ENCODE measurements at regions of chr1 and their contacts with region 1.

Region 1: GRCh38 chr1:17661546-17662157 is 93.5 kb upstream of the ACTL8 start:
- DNase-seq: peak; percentile 12
- ATAC-seq: peak; percentile 83
- H3K4me3 ChIP-seq: no peak overlapping the region
- H3K27ac ChIP-seq: no peak overlapping the region
- H3K4me1 ChIP-seq: 0 out of 4 replicates have a peak, but pooled peaks cover 0 to 4% of the 10 kb centered on the region in 2 experiments
- H3K27me3 ChIP-seq: no peaks in the 10 kb centered on the region
- CTCF ChIP-seq: peak; percentile 64 to 95 (median 84)
- POLR2A ChIP-seq: no peak
- RAD21 ChIP-seq: peak; percentile 84

Region 2: DNA sequence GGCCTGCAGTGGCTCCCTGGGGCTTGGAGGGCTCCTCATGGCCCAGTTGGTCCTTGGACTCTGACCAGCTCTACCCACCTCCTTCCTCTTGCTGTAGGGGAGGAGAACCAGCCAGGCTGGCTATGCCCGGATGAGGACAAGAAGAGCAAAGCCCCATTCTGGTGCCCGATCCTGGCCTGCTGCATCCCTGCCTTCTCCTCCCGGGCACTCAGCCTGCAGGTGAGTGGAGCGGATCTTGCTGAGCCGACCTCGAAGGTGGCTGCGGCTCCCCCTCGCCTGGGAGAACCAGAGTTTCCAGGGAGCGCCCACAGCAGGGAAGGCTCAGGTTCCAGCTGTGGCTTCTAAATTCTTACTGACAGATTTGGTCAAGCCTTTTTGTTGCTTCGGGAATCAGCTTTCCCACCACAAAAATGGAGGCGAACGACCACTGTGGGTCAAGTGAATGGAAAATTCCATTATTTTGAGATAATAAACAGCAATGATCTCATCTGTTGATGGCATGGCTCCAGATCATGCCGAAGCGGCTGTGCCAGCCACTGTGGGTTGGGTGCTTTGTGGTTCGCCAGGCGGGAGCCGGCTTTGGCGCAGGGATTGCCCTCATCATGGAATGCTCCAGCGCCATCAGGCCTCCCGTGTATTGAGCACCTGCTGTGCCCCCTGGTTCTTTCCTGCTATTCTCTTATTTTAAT is 13.1 kb before region 1 on chr1:
- CTCF ChIA-PET with region 1: interaction called, 19 read pairs
- POLR2A ChIA-PET with region 1: no interaction called
- RAD21 ChIA-PET with region 1: no interaction called
- intact Hi-C with region 1: no loop called
- DNase-seq: no peak
- ATAC-seq: no peak
- H3K4me3 ChIP-seq: no peak overlapping the region
- H3K27ac ChIP-seq: no peak overlapping the region
- H3K4me1 ChIP-seq: no peaks in the 10 kb centered on the region
- H3K27me3 ChIP-seq: no peaks in the 10 kb centered on the region
- CTCF ChIP-seq: no peak
- POLR2A ChIP-seq: no peak
- RAD21 ChIP-seq: no peak

Region 3: GRCh38 chr1:17704176-17704575 is 42.5 kb after region 1 on chr1:
- CTCF ChIA-PET with region 1: no interaction called
- POLR2A ChIA-PET with region 1: no interaction called
- RAD21 ChIA-PET with region 1: no interaction called
- intact Hi-C with region 1: no loop called
- DNase-seq: no peak
- ATAC-seq: no peak
- H3K4me3 ChIP-seq: no peak overlapping the region
- H3K27ac ChIP-seq: no peak overlapping the region
- H3K4me1 ChIP-seq: no peaks in the 10 kb centered on the region
- H3K27me3 ChIP-seq: no peaks in the 10 kb centered on the region
- CTCF ChIP-seq: no peak
- POLR2A ChIP-seq: no peak
- RAD21 ChIP-seq: no peak

Region 4: DNA sequence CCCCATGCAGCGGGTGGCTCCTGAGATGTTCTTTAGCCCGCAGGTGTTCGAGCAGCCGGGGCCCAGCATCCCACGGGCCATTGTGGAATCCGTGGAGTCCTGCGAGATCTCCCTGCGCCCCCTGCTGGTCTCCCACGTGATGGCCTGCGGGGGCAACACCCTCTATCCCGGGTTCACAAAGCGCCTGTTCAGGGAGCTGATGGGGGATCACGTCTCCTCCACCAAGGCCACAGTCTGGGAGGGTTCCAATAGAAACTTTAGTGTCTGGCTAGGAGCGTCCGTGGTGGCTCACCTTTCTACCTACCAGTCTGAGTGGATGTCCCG is 164.5 kb after region 1 on chr1:
- CTCF ChIA-PET with region 1: interaction called, 16 read pairs
- POLR2A ChIA-PET with region 1: no interaction called
- RAD21 ChIA-PET with region 1: no interaction called
- intact Hi-C with region 1: loop called (anchors 1 kb)
- DNase-seq: peak; percentile 8
- ATAC-seq: peak; percentile 93
- H3K4me3 ChIP-seq: no peak overlapping the region
- H3K27ac ChIP-seq: no peak overlapping the region
- H3K4me1 ChIP-seq: no peaks in the 10 kb centered on the region
- H3K27me3 ChIP-seq: peaks cover 15% of the 10 kb centered on the region; the same call in 1 of the 2 replicates
- CTCF ChIP-seq: peak; percentile 55 to 83 (median 76); a peak in 5 of 6 replicates
- POLR2A ChIP-seq: no peak
- RAD21 ChIP-seq: peak; percentile 68

Region 5: DNA sequence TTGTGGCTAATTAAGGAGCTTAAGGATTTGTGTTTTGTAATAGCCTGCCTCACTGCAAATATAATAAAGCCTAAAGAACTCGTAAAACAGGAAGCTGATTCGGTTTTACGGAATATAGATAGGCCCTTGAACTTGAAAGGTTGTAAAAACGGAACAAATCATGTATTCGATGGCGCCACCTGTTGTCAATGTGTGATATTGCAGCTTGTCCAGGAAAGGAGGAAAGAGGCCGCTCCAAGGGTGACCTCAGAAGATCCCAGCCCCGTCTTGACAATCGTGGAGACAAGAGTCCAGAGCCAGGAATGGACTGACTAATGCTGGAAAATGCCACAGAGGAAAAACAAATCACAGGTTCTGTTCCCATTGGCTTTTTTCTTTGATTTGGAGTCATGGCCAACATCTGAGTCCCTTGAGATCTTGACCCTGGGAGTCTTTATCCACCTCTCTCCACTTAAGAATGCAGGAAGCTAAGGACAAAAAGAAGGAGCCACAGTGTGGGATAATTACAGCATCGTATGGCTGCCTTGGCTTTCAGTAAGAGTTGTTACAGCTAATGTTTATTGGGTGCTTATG is 438.9 kb after region 1 on chr1:
- CTCF ChIA-PET with region 1: interaction called, 4 read pairs
- POLR2A ChIA-PET with region 1: no interaction called
- RAD21 ChIA-PET with region 1: no interaction called
- intact Hi-C with region 1: loop called (anchors 2 kb)
- DNase-seq: peak; percentile 50
- ATAC-seq: peak; percentile 84
- H3K4me3 ChIP-seq: no peak overlapping the region
- H3K27ac ChIP-seq: no peak overlapping the region
- H3K4me1 ChIP-seq: 0 out of 4 replicates have a peak, but pooled peaks cover 0 to 2% of the 10 kb centered on the region in 2 experiments
- H3K27me3 ChIP-seq: peaks cover 20% of the 10 kb centered on the region
- CTCF ChIP-seq: peak; percentile 65 to 77 (median 76)
- POLR2A ChIP-seq: no peak
- RAD21 ChIP-seq: peak; percentile 72

Region 6: GRCh38 chr1:18581420-18581880 is 919.8 kb after region 1 on chr1:
- CTCF ChIA-PET with region 1: interaction called, 11 read pairs
- POLR2A ChIA-PET with region 1: no interaction called
- RAD21 ChIA-PET with region 1: no interaction called
- intact Hi-C with region 1: no loop called
- DNase-seq: no peak
- ATAC-seq: peak; percentile 94
- H3K4me3 ChIP-seq: no peak overlapping the region
- H3K27ac ChIP-seq: no peak overlapping the region
- H3K4me1 ChIP-seq: peaks cover 0 to 6% of the 10 kb centered on the region in 2 experiments; a peak in 3 of 4 replicates
- H3K27me3 ChIP-seq: no peaks in the 10 kb centered on the region
- CTCF ChIP-seq: peak; percentile 52 to 93 (median 82); a peak in 5 of 6 replicates
- POLR2A ChIP-seq: no peak
- RAD21 ChIP-seq: peak; percentile 85